BJ (cell line): ENCODE measurements at regions of chr17 and their contacts with region 1.

Region 1: DNA sequence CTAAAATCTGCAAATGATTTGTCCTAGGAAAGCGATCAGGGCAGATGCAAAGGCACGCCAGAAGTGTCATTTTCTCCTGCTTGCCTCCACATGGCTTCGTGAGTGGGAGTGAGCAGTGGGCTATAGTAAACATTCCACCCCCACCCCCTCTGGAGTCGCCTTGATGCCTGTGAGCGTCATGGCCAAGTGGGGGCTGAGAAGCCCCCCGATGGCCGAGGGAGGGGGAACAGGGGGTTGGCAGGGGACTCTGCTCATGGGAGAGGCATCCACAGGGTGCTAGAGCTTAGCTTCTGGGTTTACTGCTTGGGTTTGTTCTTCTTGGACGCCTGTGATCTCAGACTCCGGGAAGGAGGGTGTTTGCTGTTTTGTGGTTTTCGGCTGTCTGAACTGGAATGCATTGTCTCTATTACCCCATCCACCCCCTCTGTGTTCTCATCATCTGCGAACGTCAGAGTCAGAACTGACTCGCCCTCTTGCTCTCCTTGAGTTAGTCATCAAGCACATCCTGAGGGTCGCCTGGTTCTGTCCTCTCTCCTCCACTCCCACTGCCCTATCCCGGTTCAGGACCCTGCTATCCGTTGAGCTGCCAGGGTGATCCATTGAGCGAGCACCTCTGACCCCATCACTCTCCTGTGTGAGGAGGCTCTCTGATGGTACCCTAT is 15.4 kb downstream of the TNS4 start:
- DNase-seq: peak; percentile 99
- H3K4me3 ChIP-seq: peak overlapping the region; percentile 10; the same call in 1 of the 2 replicates
- H3K27me3 ChIP-seq: no peaks in the 10 kb centered on the region
- CTCF ChIP-seq: no peak

Region 2: GRCh38 chr17:40382251-40382650 is 103.7 kb before region 1 on chr17:
- CTCF ChIA-PET with region 1: no interaction called
- POLR2A ChIA-PET with region 1: no interaction called
- DNase-seq: no peak
- H3K4me3 ChIP-seq: no peak overlapping the region
- H3K27me3 ChIP-seq: no peaks in the 10 kb centered on the region
- CTCF ChIP-seq: no peak

Region 3: GRCh38 chr17:40410082-40410481 is 75.9 kb before region 1 on chr17:
- CTCF ChIA-PET with region 1: interaction called, 3 read pairs
- POLR2A ChIA-PET with region 1: interaction called, 10 read pairs
- DNase-seq: no peak
- H3K4me3 ChIP-seq: no peak overlapping the region
- H3K27me3 ChIP-seq: no peaks in the 10 kb centered on the region
- CTCF ChIP-seq: no peak

Region 4: DNA sequence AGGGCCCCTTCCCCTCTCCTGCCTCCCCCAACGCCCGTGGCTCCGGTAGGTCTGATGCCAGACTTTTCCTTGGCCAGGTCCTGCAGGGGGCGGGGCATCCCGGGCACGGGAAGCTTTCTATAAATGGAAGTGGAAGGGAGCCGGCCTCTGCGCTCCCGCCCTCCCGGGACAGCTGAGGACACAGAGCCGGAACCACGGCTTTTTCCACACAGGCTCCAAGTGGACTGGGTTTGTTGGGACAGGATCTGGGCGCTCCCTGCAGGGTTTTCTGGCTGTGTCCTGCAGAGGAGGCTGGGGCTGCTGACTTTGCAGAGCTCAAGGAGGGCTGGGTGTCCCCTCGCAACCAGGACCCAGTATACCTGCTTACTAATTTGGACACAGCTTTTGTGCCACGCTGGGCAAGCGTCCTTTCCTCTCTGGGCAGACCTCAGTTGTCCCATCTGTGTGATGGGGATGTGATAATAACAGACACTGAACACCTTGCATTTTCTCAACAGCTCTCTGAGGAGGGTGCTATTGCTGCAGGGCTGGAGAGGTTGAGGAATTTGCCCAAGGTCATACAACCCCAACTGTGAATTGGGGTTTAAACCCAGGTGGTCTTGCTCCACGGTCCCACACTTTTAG is 13.7 kb after region 1 on chr17:
- CTCF ChIA-PET with region 1: interaction called, 6 read pairs
- POLR2A ChIA-PET with region 1: interaction called, 10 read pairs
- DNase-seq: no peak
- H3K4me3 ChIP-seq: no peak overlapping the region
- H3K27me3 ChIP-seq: no peaks in the 10 kb centered on the region
- CTCF ChIP-seq: no peak